RWPE1 (cell line): ENCODE measurements at regions of chr9 and their contacts with region 1.

Region 1: DNA sequence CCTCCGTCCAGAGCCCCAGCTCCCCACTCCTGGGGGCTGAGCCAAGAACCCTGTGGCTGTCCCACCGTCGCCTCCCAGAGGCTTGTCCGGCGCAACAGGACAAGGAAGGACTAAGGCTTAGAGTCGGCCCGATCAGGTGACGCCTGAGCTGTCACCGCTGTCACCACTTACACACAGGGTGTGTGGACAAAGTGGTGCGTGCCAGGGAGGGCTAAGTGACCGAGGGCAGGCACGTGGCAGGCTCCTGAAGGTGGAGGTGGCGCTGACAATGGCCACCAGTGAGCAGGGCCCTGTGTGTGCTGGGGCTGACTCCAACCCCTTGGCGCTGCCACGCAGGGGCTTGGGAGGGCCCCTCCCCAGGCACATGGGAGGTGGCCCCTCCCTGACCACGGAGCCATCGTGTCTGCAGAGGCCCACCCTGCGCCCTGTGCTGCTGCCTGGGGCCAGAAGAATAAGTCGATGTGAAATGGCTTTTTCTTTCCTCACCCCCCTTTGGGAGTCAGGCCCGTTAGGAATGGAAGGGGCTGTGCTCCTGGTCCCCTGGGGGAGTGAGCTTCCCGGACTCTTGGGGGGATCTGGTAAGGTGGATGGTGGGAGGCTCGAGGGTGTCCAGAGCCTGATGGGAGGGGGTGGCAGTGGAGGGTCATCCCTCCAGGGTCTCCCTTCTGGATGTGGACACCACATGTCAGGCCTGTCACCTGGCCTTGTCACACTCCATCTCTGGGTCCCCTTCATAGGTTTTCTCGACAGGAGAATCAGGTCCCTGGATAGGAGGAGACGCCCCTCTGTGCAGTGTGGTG is 2.6 kb upstream of the GPSM1 start:
- DNase-seq: no peak
- H3K27ac ChIP-seq: peak overlapping the region; percentile 30
- CTCF ChIP-seq: no peak

Region 2: DNA sequence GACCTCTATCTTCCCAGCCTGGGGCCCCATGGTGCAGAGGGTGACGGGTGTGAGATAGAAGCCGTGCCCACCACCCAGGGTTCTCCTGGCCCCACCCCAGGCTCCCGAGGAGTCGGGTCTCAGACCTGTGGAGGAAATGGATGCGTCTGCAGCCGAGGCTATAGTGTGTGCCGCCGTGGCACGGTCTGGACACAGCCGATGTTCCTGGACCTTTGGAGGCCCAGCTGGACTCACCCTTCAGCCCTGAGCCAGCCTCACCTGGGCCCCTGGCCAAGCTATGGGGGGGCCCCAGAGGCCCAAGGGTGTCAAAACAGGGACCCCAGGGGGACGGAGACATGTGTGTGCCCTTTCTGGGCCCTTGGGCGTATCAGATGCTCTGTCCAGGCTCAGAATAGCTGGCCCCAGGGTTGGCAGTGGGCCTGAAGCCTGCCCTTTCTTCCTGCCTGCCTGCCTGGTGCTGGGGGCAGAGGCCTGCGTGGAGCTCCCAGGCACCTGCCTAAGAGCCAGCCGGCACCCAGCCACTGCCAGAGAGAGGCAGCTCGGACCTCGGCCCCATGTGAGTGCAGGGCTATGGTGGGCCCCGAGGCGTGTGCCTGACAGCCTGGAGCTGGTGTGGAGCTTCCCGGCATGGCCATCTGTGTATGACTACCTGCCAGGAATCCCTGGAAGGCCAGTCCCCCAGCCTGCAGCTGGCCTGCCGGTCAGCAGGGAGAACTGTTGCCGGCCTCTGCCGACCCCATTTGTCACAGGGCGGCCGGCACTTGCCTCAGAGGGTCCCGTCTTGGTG is 581.0 kb before region 1 on chr9:
- CTCF ChIA-PET with region 1: no interaction called
- POLR2A ChIA-PET with region 1: no interaction called
- DNase-seq: no peak
- H3K27ac ChIP-seq: no peak overlapping the region
- CTCF ChIP-seq: no peak

Region 3: GRCh38 chr9:136002881-136003280 is 321.8 kb before region 1 on chr9:
- CTCF ChIA-PET with region 1: no interaction called
- POLR2A ChIA-PET with region 1: no interaction called
- DNase-seq: no peak
- H3K27ac ChIP-seq: no peak overlapping the region
- CTCF ChIP-seq: no peak

Region 4: GRCh38 chr9:136273244-136273865 is 51.3 kb before region 1 on chr9:
- CTCF ChIA-PET with region 1: no interaction called
- POLR2A ChIA-PET with region 1: no interaction called
- DNase-seq: no peak
- H3K27ac ChIP-seq: no peak overlapping the region
- CTCF ChIP-seq: no peak

Region 5: DNA sequence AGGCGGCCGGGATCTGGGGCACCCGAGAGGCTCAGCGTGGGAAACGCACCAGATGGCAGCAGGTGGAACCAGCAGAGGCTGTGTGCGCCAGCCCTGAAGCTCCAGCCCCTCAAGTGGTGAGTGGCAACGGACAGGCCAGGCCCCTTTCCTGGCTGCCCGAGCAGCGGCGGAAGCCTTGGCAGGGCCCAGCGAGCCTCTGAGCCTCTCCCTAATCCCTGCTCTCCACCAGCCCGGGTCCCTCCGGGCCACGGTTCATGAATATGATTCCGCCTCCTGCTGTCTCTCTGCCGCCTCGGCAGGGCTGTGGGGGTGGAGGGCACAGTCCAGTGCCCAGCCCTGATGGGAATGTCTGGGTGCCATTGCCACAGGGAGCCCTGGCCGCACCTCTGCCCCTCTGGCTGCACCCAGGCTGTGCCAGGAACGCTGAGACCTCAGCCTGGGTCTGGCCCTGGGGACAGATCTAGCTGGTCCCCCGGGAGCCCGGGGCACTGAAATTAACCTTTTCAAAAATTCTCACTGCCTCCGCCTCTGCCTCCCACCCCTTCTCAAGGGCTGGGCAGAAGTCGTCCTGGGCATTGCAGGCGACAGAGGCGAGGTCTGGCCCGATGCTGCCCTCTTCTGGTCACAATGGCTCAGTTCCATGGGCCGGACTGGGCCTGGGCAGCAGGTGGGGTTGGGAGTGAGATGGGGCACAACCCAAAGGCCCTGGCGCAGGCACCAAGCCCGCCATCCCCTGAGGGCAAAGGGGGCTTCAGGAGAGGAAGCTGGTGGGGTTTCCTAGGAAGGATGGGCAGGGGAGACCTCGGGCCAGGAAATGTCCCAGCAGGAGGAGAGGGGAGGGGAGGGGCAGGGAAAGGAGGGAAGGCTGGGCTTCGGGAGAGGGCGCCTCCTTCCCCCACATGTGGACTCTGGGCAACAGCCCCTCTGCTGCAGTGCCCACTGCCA is 41.1 kb before region 1 on chr9:
- CTCF ChIA-PET with region 1: no interaction called
- POLR2A ChIA-PET with region 1: no interaction called
- DNase-seq: peak; percentile 87
- H3K27ac ChIP-seq: no peak overlapping the region
- CTCF ChIP-seq: peak; percentile 99

Region 6: GRCh38 chr9:136312436-136312835 is 12.3 kb before region 1 on chr9:
- CTCF ChIA-PET with region 1: interaction called, 12 read pairs
- POLR2A ChIA-PET with region 1: no interaction called
- DNase-seq: peak; percentile 90
- H3K27ac ChIP-seq: no peak overlapping the region
- CTCF ChIP-seq: peak; percentile 81

Region 7: GRCh38 chr9:136339173-136339957 is 14.7 kb after region 1 on chr9:
- CTCF ChIA-PET with region 1: interaction called, 11 read pairs
- POLR2A ChIA-PET with region 1: no interaction called
- DNase-seq: peak; percentile 84
- H3K27ac ChIP-seq: peak overlapping the region; percentile 23
- CTCF ChIP-seq: peak; percentile 100